Naive thymus-derived CD4-positive, alpha-beta T cell (primary cell): ENCODE measurements at regions of chr3 and their contacts with region 1.

Region 1: DNA sequence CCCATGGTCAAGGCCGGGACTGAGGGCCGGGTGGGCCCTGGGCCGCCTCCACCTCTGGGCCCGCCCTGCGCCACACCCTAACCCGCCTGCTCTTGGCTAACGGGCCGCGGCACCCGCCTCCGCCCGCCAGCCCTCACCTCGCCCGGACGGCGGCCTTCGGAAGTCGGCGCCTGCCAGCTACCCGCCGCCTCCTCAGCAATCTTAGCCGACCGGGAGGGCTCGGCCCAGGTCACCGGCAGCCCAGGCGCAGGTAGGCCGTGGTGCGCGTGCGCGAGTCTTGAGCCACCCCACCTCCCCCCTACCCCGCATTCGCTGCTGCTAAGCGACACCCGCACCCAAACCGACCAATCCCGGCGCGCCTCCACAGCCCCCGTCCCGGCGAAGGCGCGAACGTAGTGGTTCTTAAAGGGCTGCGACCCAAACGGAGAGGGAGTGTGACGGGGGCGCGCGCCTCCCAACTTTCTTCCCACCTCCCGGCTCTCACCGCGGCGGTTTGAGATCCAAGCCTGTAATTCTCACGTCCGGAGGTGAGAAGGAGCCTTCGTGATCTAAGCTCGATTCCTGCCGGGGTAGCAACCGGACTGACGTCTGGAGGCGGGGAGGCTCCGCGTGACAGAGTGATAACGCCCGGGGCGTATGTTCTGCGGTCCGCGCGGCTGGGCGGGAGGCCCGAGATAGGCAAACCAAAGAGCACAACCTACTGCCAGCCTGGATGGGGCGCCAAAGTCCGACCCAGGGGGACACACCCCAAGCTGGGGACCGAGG is at the start of gene SEC22C:
- DNase-seq: peak; percentile 86 to 95 (median 94)
- ATAC-seq: peak; percentile 94
- H3K4me3 ChIP-seq: peak within 1 kb of the TSS; percentile 86
- H3K4me3 Mint-ChIP-seq: peak within 1 kb of the TSS; percentile 77 to 97 (median 94)
- H3K27ac ChIP-seq: peak within 1 kb of the TSS; percentile 92
- H3K27ac Mint-ChIP-seq: peak within 1 kb of the TSS; percentile 89 to 99 (median 96)
- H3K4me1 ChIP-seq: peaks cover 19 to 25% of the 10 kb centered on the region in 2 donors
- H3K4me1 Mint-ChIP-seq: peaks cover 31 to 60% (median 57%) of the 10 kb centered on the region in 7 donors
- H3K27me3 ChIP-seq: no peaks in the 10 kb centered on the region
- H3K27me3 Mint-ChIP-seq: no peaks in the 10 kb centered on the region
- total RNA-seq, gene SEC22C: 39.7 to 54.8 (median 51.3) TPM

Region 2: DNA sequence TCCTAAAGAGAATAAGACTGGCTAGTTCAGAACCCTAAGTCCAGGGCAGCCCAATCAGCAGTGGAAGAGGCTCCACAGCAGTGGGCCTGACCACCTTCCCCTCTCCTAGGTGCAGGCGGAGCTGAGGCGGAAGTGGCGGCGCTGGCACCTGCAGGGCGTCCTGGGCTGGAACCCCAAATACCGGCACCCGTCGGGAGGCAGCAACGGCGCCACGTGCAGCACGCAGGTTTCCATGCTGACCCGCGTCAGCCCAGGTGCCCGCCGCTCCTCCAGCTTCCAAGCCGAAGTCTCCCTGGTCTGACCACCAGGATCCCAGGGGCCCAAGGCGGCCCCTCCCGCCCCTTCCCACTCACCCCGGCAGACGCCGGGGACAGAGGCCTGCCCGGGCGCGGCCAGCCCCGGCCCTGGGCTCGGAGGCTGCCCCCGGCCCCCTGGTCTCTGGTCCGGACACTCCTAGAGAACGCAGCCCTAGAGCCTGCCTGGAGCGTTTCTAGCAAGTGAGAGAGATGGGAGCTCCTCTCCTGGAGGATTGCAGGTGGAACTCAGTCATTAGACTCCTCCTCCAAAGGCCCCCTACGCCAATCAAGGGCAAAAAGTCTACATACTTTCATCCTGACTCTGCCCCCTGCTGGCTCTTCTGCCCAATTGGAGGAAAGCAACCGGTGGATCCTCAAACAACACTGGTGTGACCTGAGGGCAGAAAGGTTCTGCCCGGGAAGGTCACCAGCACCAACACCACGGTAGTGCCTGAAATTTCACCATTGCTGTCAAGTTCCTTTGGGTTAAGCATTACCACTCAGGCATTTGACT is 45.7 kb before region 1 on chr3:
- CTCF ChIA-PET with region 1: no interaction called
- POLR2A ChIA-PET with region 1: no interaction called
- intact Hi-C with region 1: no loop called
- DNase-seq: peak in 6 of 9 donors; percentile 27 to 50 (median 44)
- ATAC-seq: peak; percentile 64
- H3K4me3 ChIP-seq: no peak overlapping the region
- H3K4me3 Mint-ChIP-seq: peak overlapping the region in 1 of 10 donors; percentile 17
- H3K27ac ChIP-seq: no peak overlapping the region
- H3K27ac Mint-ChIP-seq: peak overlapping the region in 8 of 9 donors; percentile 59 to 95 (median 74)
- H3K4me1 ChIP-seq: peaks cover 7 to 35% of the 10 kb centered on the region in 2 donors
- H3K4me1 Mint-ChIP-seq: peaks cover 25 to 75% (median 70%) of the 10 kb centered on the region in 7 donors
- H3K27me3 ChIP-seq: no peaks in the 10 kb centered on the region
- H3K27me3 Mint-ChIP-seq: no peaks in the 10 kb centered on the region

Region 3: DNA sequence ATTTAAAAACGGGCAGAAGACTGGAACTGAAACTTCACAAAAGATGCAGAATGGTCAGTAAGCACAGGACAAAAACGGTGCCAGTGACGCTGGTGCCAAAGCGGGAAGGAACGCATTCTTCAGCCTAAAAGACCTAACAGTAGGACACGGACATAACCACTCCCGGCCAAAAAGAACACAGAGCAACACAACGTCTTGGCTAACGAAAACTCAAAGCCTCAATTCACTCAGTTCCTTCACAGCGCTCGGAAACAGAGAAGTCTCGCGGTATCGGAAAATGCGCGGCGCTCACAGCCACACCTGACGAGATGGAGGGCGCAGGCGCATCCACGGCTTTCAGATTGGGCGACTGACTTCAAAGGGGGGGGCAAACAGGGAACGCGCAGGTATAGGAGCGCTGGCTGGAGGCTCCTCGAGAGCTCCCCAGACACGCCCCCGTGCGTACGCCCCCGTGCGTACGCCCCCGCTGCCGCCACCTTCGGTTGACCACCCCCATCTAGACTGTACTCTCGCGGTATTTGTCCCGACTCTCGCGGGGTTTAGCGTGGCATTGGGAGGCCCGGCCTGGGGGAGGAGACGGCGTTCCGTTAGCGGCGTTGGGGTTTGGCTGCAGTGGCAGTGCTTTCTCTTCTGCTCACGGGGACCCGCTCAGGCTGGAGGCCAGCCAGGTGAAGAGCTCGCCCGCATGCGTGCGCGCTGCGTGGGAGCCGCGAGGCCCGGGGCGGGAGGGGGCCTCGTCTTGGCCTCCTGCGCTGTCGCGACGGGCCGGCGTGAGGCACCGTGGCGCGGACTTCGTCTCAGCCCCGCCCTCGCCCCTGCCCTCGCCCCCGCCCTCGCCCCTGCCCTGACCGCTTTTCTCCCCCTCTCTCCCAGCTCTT is 18.5 kb after region 1 on chr3 and contains the start of gene NKTR:
- CTCF ChIA-PET with region 1: interaction called, 8 read pairs
- POLR2A ChIA-PET with region 1: interaction called, 27 read pairs
- intact Hi-C with region 1: loop called (anchors 1 kb)
- DNase-seq: peak; percentile 98 to 100 (median 100)
- ATAC-seq: peak; percentile 97
- H3K4me3 ChIP-seq: peak within 1 kb of the TSS; percentile 75
- H3K4me3 Mint-ChIP-seq: peak within 1 kb of the TSS; percentile 91 to 98 (median 95)
- H3K27ac ChIP-seq: peak within 1 kb of the TSS; percentile 93
- H3K27ac Mint-ChIP-seq: peak within 1 kb of the TSS; percentile 95 to 99 (median 98)
- H3K4me1 ChIP-seq: peaks cover 11 to 25% of the 10 kb centered on the region in 2 donors
- H3K4me1 Mint-ChIP-seq: peaks cover 26 to 53% (median 43%) of the 10 kb centered on the region in 7 donors
- H3K27me3 ChIP-seq: no peaks in the 10 kb centered on the region
- H3K27me3 Mint-ChIP-seq: peaks cover 0 to 2% (median 0%) of the 10 kb centered on the region in 5 donors
- total RNA-seq, gene NKTR: 110 to 275 (median 238) TPM

Region 4: GRCh38 chr3:42635111-42635510 is 53.2 kb after region 1 on chr3:
- CTCF ChIA-PET with region 1: interaction called, 3 read pairs
- POLR2A ChIA-PET with region 1: interaction called, 6 read pairs
- intact Hi-C with region 1: loop called (anchors 1 kb)
- DNase-seq: peak in 2 of 9 donors; percentile 23 to 28
- ATAC-seq: peak; percentile 63
- H3K4me3 ChIP-seq: no peak overlapping the region
- H3K4me3 Mint-ChIP-seq: no peak overlapping the region
- H3K27ac ChIP-seq: no peak overlapping the region
- H3K27ac Mint-ChIP-seq: peak overlapping the region in 5 of 9 donors; percentile 9 to 63 (median 34)
- H3K4me1 ChIP-seq: peaks cover 21 to 23% of the 10 kb centered on the region in 2 donors
- H3K4me1 Mint-ChIP-seq: peaks cover 0 to 16% (median 4%) of the 10 kb centered on the region in 7 donors
- H3K27me3 ChIP-seq: no peaks in the 10 kb centered on the region
- H3K27me3 Mint-ChIP-seq: no peaks in the 10 kb centered on the region

Region 5: DNA sequence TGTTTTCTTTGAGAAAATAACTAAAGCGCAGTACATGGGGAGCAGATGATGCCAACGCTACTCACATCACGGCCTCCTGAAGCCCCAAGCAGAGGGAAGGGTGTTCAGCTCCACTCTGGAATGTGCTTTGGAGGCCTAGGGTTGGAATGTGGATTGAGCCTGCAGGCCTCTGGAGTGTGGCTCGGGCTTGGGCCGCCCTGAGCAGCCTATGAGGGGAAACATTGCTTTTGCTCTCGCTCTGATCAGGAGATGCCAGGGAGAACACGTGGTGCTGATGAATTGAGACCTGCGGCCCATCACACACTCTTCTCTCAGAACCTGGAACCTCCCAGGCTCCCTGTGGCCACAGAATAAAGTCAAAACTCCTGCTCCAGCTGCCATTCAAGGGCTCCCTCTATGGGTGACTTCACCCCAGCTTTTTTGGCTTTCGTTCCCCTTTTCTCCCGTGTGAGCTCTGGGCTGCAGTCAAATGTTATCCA is 167.9 kb after region 1 on chr3:
- CTCF ChIA-PET with region 1: interaction called, 3 read pairs
- POLR2A ChIA-PET with region 1: interaction called, 5 read pairs
- intact Hi-C with region 1: loop called (anchors 1 kb)
- DNase-seq: no peak
- ATAC-seq: peak; percentile 63
- H3K4me3 ChIP-seq: no peak overlapping the region
- H3K4me3 Mint-ChIP-seq: peak overlapping the region in 1 of 10 donors; percentile 12
- H3K27ac ChIP-seq: no peak overlapping the region
- H3K27ac Mint-ChIP-seq: peak overlapping the region in 4 of 9 donors; percentile 17 to 65 (median 36)
- H3K4me1 ChIP-seq: peaks cover 15 to 38% of the 10 kb centered on the region in 2 donors
- H3K4me1 Mint-ChIP-seq: peaks cover 16 to 40% (median 31%) of the 10 kb centered on the region in 7 donors
- H3K27me3 ChIP-seq: no peaks in the 10 kb centered on the region
- H3K27me3 Mint-ChIP-seq: no peaks in the 10 kb centered on the region

Region 6: GRCh38 chr3:43690400-43691119 is 1108.7 kb after region 1 on chr3 and contains the start of gene ABHD5:
- CTCF ChIA-PET with region 1: no interaction called
- POLR2A ChIA-PET with region 1: no interaction called
- intact Hi-C with region 1: loop called in 1 of 2 experiments (anchors 5 kb)
- DNase-seq: peak; percentile 94 to 99 (median 96)
- ATAC-seq: peak; percentile 96
- H3K4me3 ChIP-seq: peak within 1 kb of the TSS; percentile 74
- H3K4me3 Mint-ChIP-seq: peak within 1 kb of the TSS; percentile 91 to 98 (median 94)
- H3K27ac ChIP-seq: peak within 1 kb of the TSS; percentile 85
- H3K27ac Mint-ChIP-seq: peak within 1 kb of the TSS; percentile 90 to 97 (median 92)
- H3K4me1 ChIP-seq: peaks cover 8% of the 10 kb centered on the region in 2 donors
- H3K4me1 Mint-ChIP-seq: peaks cover 11 to 47% (median 37%) of the 10 kb centered on the region in 7 donors
- H3K27me3 ChIP-seq: no peaks in the 10 kb centered on the region
- H3K27me3 Mint-ChIP-seq: peaks cover 0 to 6% (median 0%) of the 10 kb centered on the region in 5 donors
- total RNA-seq, gene ABHD5: 6.1 to 21.0 (median 12.1) TPM